ENCODE measurements at regions of chr6 and their contacts with region 1.

Region 1: DNA sequence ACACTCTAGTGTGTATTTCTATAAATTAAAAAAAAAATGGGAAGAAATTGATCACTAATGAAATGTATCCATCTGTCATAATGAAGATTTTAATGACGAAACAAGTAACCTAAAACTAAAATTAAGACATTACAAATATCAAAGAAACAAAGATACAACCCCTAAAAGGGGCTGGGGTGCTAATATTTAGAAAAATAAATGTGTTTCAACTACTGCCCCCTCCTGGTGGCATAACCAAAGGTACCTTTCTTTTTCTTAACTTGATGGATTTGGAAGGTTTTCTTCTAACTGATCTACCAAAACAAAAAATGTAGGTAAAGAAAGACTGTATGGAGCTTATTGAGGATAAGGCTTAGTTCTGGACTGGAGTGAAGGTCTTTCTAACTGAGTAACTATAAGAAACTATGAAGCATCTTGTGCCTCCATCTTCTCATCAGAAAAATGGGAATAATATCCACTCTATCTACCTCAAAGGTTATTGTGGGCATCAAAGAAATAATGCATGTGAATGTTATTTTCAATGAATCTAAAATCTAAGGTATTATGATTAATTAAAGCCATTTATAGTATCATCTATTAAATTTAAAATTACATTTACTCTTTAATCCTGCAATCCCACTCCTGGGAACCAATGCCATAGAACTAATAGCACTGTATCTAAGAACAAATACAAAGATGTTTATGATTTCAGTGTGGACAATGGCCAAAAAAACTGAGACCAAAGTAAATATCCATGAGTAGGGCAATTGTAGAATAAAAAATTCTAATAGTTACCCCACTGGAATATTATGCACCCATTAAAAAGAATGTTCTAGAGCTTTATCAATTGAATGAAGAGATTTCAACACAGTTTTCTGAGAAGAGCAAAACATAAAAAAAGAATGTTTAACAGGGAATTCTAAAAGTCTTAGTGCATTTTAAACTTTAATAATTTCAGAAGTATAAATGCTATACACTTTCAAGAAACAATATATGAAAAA is 117.2 kb downstream of the BACH2 start:
- DNase-seq: no peak
- H3K4me3 Mint-ChIP-seq: no peak overlapping the region
- H3K27ac Mint-ChIP-seq: no peak overlapping the region
- H3K4me1 Mint-ChIP-seq: peaks cover 69% of the 10 kb centered on the region
- H3K27me3 Mint-ChIP-seq: no peaks in the 10 kb centered on the region

Region 2: DNA sequence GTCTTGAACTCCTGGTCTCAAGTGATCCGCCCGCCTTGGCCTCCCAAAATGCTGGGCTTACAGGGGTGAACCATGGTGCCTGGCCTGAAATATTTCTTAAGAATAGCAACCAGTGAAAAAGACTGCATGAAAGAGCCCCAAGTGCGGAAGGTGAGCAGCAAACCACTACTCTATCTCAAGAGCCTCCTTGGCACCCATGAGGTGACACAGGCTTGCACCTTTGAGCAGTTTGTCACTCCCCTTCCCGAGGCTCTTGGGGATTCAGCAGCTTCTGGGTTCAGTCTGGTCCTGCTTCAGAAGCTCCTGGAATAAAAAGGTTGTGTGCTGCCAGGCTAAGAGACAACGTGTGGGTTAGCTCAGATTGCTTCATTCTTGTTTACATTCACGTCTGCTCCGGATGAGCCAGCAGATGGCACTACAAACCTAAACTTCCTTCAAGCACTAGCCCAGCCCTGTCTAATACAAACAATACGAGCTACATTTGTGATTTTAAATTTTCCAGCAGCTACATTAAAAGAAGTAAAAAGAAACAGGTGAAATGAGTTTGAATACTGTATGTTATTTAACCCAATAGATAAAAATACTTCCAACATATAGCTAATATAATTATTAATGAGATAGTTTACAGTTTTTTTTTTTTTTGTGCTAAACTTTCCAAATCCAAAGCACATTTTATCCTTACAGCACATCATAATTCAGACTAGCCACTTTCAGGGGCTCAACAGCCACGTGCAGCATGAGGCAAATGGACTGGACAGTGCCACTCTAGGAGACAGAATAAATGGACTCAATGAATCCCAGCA is 239.1 kb before region 1 on chr6:
- intact Hi-C with region 1: loop called (anchors 2 kb)
- DNase-seq: peak; percentile 57
- H3K4me3 Mint-ChIP-seq: no peak overlapping the region
- H3K27ac Mint-ChIP-seq: no peak overlapping the region
- H3K4me1 Mint-ChIP-seq: peaks cover 25% of the 10 kb centered on the region
- H3K27me3 Mint-ChIP-seq: no peaks in the 10 kb centered on the region

Region 3: GRCh38 chr6:89952686-89953085 is 226.8 kb before region 1 on chr6:
- intact Hi-C with region 1: no loop called
- DNase-seq: peak; percentile 54
- H3K4me3 Mint-ChIP-seq: peak overlapping the region; percentile 53
- H3K27ac Mint-ChIP-seq: peak overlapping the region; percentile 61
- H3K4me1 Mint-ChIP-seq: peaks cover 71% of the 10 kb centered on the region
- H3K27me3 Mint-ChIP-seq: no peaks in the 10 kb centered on the region

Region 4: DNA sequence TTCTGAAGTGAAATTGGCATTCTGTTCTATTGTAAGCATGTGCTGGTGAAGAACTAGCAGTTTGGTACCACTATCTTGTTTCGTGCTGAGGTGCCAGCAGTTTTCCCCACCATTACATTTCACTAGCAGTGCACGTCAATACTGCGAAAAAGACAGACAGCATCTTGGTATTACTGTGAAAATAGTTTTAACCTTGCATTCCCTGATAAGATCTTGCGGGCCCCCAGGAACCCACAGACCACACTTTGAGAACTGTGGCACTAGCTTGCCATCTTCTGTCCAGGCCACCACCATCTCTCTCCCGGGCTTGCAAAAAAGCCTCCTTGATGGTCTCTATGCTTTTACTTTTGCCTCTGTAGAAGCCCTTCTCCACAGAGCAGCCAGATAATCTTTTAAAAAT is 68.5 kb before region 1 on chr6:
- intact Hi-C with region 1: loop called (anchors 2 kb)
- DNase-seq: peak; percentile 43
- H3K4me3 Mint-ChIP-seq: no peak overlapping the region
- H3K27ac Mint-ChIP-seq: peak overlapping the region; percentile 72
- H3K4me1 Mint-ChIP-seq: peaks cover 66% of the 10 kb centered on the region
- H3K27me3 Mint-ChIP-seq: no peaks in the 10 kb centered on the region

Region 5: DNA sequence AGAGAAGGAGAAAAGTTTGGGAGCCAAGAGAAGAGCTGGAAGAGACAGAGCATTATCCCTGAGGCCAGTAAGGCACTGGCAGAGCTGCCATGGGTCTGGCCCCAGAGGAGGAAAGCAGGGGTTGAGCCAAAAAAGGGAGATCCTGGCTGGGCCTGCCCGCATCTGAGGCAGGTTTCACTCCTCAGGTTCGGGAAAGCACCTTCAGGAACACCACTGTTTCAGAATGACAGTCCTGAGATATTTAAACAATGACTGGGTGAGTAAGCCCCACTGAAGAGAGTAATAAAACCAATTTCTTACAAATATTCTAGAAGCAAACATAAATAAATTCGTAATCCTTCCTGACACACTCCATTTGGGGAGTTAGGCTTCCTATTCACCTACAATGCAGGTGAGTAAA is 35.1 kb before region 1 on chr6:
- intact Hi-C with region 1: loop called (anchors 1 kb)
- DNase-seq: no peak
- H3K4me3 Mint-ChIP-seq: peak overlapping the region; percentile 45
- H3K27ac Mint-ChIP-seq: peak overlapping the region; percentile 78
- H3K4me1 Mint-ChIP-seq: peaks cover 66% of the 10 kb centered on the region
- H3K27me3 Mint-ChIP-seq: peaks cover 15% of the 10 kb centered on the region

Region 6: DNA sequence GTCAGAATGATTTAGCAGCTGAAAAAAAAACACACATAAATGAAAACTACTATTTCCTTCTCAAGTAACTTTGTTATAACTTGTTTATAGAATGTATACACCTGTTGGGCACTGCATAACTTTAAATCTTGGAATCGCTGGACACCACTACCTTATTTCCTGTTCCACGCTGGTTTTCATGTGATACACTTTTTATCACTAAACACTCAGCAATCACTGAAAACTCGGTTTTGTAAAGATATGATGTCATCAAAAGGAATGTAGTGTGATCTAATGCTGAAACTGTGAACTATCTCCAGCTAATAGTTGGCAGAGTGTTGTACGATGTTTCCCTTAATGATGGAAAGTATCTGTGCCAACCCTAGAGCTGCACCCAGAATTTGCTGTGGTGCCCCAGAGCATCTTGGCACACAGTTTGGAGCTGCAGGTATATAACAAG is 10.8 kb before region 1 on chr6:
- intact Hi-C with region 1: loop called (anchors 1 kb)
- DNase-seq: no peak
- H3K4me3 Mint-ChIP-seq: no peak overlapping the region
- H3K27ac Mint-ChIP-seq: no peak overlapping the region
- H3K4me1 Mint-ChIP-seq: peaks cover 30% of the 10 kb centered on the region
- H3K27me3 Mint-ChIP-seq: peaks cover 4% of the 10 kb centered on the region

Region 7: GRCh38 chr6:90202156-90202555 is 22.7 kb after region 1 on chr6:
- intact Hi-C with region 1: loop called (anchors 2 kb)
- DNase-seq: no peak
- H3K4me3 Mint-ChIP-seq: peak overlapping the region; percentile 71
- H3K27ac Mint-ChIP-seq: peak overlapping the region; percentile 85
- H3K4me1 Mint-ChIP-seq: peaks cover 43% of the 10 kb centered on the region
- H3K27me3 Mint-ChIP-seq: no peaks in the 10 kb centered on the region

Region 8: GRCh38 chr6:90547991-90548390 is 368.5 kb after region 1 on chr6:
- intact Hi-C with region 1: no loop called
- DNase-seq: no peak
- H3K4me3 Mint-ChIP-seq: no peak overlapping the region
- H3K27ac Mint-ChIP-seq: no peak overlapping the region
- H3K4me1 Mint-ChIP-seq: peaks cover 11% of the 10 kb centered on the region
- H3K27me3 Mint-ChIP-seq: no peaks in the 10 kb centered on the region

Measured in activated T-helper 1 cell treated with anti-CD3 and anti-CD28 coated beads, Interleukin-12 subunit alpha, Interleukin-12 subunit beta, Interleukin-2, Interleukin-4 antibody, amounts not matched to agents 30 ng/mL and 10 ng/mL and 1 ng/mL, durations not matched to agents 14 hours and 24 hours and 36 hours (primary cell).